Astrocyte of the cerebellum (primary cell): ENCODE measurements at regions of chr6 and their contacts with region 1.

Region 1: DNA sequence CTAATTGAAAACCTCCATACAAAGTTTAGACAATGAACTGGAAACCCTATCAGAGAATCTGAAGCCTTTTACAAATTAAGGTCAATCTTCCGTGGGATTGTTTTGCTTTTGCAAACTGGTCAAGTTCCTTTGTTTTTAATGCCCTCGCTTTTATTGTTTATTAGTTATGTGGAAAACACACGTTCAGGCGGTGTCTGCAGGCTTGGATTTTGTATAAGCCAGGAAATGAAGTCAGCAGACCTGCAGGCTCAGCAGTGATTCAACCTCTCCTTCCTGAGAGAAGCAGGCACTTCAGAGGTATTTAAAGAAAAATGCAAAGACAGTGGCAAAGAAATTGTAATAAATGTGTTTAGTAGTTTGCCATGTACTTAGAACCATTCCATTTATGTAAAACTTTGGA is 103.4 kb upstream of the PDE10A start:
- DNase-seq: peak; percentile 12
- H3K4me3 ChIP-seq: no peak overlapping the region
- CTCF ChIP-seq: no peak

Region 2: GRCh38 chr6:165804331-165805066 is 38.0 kb after region 1 on chr6:
- in situ Hi-C with region 1: loop called (anchors 5 kb)
- DNase-seq: peak; percentile 12
- H3K4me3 ChIP-seq: peak overlapping the region; percentile 31
- CTCF ChIP-seq: no peak